Activated CD4-positive, alpha-beta T cell treated with anti-CD3 and anti-CD28 coated beads, Interleukin-2, amount 10 ng/mL, durations not matched to agents 24 days and 14 days (primary cell): ENCODE measurements at regions of chr6 and their contacts with region 1.

Region 1: GRCh38 chr6:31665501-31666336 is at the start of gene CSNK2B:
- DNase-seq: peak; percentile 99
- H3K4me3 Mint-ChIP-seq: peak within 1 kb of the TSS; percentile 96
- H3K27ac Mint-ChIP-seq: peak within 1 kb of the TSS; percentile 96
- H3K4me1 Mint-ChIP-seq: peaks cover 58% of the 10 kb centered on the region
- H3K27me3 Mint-ChIP-seq: no peaks in the 10 kb centered on the region
- total RNA-seq, gene CSNK2B: 288 and 302 TPM in 2 replicates

Region 2: GRCh38 chr6:31619805-31620585 is 45.7 kb before region 1 on chr6:
- intact Hi-C with region 1: loop called (anchors 1 kb)
- DNase-seq: peak; percentile 99
- H3K4me3 Mint-ChIP-seq: peak overlapping the region; percentile 90
- H3K27ac Mint-ChIP-seq: peak overlapping the region; percentile 95
- H3K4me1 Mint-ChIP-seq: peaks cover 46% of the 10 kb centered on the region
- H3K27me3 Mint-ChIP-seq: no peaks in the 10 kb centered on the region

Region 3: GRCh38 chr6:31680840-31681671 is 15.3 kb after region 1 on chr6 and contains the start of gene LY6G5C:
- intact Hi-C with region 1: loop called (anchors 1 kb)
- DNase-seq: peak; percentile 89
- H3K4me3 Mint-ChIP-seq: peak within 1 kb of the TSS; percentile 83
- H3K27ac Mint-ChIP-seq: peak within 1 kb of the TSS; percentile 82
- H3K4me1 Mint-ChIP-seq: peaks cover 25% of the 10 kb centered on the region
- H3K27me3 Mint-ChIP-seq: no peaks in the 10 kb centered on the region
- total RNA-seq, gene LY6G5C: 4.1 and 4.9 TPM in 2 replicates

Region 4: GRCh38 chr6:31827286-31828079 is 161.8 kb after region 1 on chr6 and contains the start of gene HSPA1B:
- intact Hi-C with region 1: loop called (anchors 1 kb)
- DNase-seq: peak; percentile 98
- H3K4me3 Mint-ChIP-seq: peak within 1 kb of the TSS; percentile 87
- H3K27ac Mint-ChIP-seq: peak within 1 kb of the TSS; percentile 93
- H3K4me1 Mint-ChIP-seq: peaks cover 37% of the 10 kb centered on the region
- H3K27me3 Mint-ChIP-seq: no peaks in the 10 kb centered on the region
- total RNA-seq, gene HSPA1B: 156 and 161 TPM in 2 replicates

Region 5: DNA sequence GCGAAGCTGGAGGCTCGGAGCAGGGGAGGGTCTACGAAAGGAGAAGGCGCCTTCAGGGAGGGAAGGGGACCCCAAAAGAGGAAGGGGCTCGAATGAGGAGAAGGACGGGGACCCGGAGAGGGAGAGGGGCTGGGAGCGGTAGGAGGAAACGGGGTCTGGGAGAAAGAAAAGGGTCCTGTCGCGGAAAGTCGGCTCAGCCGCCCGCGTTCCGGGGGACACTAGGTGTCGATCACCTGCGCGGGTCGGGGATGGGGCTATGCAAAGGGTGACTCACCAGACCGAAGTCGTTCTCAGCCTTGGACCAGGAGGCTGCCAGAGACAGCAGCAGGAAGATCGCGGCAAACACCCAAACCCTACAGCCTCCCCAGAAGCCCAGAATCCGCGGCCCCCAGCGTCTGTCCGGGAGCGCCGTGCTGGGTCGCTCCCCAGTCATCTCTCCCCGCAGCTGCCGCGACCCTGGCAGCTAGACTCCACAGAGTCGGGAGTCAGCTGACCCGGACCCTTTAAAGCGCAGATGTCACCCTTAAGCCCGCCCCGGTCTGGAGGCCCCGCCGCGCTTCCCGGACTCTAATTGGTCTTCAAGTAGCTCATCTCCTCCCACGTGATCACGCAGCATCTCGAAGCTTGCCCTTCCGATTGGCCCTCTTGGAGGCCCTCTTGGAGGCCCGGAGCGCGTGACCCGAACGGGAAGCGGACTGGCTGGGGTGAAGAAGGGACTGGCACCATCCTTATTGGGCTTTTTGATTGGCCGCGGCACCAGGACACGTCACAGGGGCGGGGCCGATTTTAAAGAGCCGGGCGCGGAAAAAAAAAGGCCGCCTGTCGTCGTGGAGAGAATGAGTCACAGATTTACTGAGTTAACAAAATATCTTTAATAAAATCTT is 196.9 kb after region 1 on chr6 and contains the start of gene NEU1:
- intact Hi-C with region 1: loop called (anchors 1 kb)
- DNase-seq: peak; percentile 100
- H3K4me3 Mint-ChIP-seq: peak within 1 kb of the TSS; percentile 93
- H3K27ac Mint-ChIP-seq: peak within 1 kb of the TSS; percentile 91
- H3K4me1 Mint-ChIP-seq: peaks cover 21% of the 10 kb centered on the region
- H3K27me3 Mint-ChIP-seq: peaks cover 3% of the 10 kb centered on the region
- total RNA-seq, gene NEU1: 20.4 and 22.2 TPM in 2 replicates